PC-3 (cell line): ENCODE measurements at regions of chr2 and their contacts with region 1.

Region 1: DNA sequence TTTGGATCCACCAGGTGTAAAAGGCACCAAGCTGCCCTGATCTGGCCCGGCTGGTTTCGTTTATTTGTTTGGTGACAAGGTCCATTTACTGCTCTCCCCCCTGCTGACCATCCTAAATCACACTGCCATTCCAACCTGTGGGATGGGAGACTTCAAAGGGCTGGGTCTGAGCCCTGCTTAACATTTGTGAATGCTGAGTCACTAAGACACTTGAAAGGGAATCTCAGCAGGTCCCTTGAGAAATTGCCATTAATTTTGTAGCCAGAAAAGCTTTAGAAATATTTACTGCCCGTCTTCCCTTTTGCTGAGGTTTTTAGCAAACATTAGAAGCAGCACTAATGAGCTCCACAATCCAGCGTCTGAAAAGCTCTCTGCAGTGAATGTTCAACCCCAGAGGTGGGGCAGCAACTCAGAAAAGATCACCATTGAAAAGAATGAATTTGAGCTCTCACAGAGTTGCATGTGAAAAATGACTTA is 133.8 kb downstream of the ARL4C start:
- DNase-seq: peak; percentile 95
- ATAC-seq: peak; percentile 92
- H3K4me3 ChIP-seq: peak overlapping the region; percentile 40
- H3K27ac ChIP-seq: peak overlapping the region; percentile 90
- H3K4me1 ChIP-seq: peaks cover 57% of the 10 kb centered on the region
- H3K27me3 ChIP-seq: no peaks in the 10 kb centered on the region
- CTCF ChIP-seq: no peak

Region 2: DNA sequence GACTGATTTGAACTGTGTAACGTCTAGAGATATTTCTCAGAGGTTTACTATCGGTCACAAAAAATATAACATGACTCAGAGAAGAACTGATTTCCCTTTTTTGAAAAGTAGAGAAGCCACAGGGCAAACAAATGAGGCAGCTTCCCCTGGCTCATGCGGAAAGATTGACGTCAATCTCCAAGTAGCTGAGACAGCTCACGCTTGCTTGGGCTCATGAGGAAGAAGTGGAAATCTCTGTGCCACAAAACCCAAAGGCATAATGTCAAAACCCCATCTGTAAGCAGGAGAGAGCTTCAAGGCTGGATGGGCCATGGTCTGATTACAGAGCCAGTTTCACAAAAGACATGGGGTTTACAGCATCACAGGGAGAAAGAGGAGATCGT is 54.2 kb before region 1 on chr2:
- CTCF ChIA-PET with region 1: no interaction called
- POLR2A ChIA-PET with region 1: interaction called, 3 read pairs
- intact Hi-C with region 1: loop called (anchors 5 kb)
- DNase-seq: peak; percentile 92
- ATAC-seq: peak; percentile 90
- H3K4me3 ChIP-seq: no peak overlapping the region
- H3K27ac ChIP-seq: peak overlapping the region; percentile 98
- H3K4me1 ChIP-seq: peaks cover 40% of the 10 kb centered on the region
- H3K27me3 ChIP-seq: no peaks in the 10 kb centered on the region
- CTCF ChIP-seq: no peak